ENCODE measurements at regions of chr12 and their contacts with region 1.

Region 1: DNA sequence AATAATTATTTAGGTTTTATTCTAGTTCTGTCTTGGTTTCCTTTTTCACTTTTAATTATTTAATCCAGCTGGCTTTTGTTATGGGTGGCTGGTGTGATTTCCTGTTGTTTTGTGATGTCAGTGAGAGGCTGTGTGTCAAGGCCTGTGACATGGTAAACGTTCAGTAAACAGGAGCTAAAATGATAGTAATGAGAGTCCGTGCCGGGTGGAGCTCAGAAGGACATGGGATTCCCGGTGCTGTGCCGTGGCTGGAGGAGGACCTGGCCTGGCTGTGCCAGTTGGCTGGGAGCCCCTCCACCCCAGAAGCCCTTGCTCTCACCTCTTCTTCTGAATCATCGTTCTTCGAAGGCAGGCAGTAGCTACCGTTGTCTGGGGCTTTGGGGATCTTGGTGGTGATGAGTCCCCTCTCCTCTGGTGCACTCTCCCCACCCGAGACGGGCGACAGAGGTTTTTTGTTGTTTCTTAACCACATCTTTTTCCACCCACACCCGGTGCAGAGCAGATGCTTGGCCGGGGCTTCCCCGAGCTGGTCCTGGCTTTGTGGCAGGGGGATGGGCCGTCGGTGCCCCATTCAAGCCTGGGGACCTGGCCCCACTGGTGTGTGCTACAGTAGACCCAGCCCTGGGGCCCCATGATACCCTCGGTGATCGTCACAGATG is 29.1 kb downstream of the SH2B3 start:
- DNase-seq: peak; percentile 96
- H3K4me3 Mint-ChIP-seq: peak overlapping the region; percentile 78
- H3K27ac Mint-ChIP-seq: peak overlapping the region; percentile 97
- H3K4me1 Mint-ChIP-seq: peaks cover 83% of the 10 kb centered on the region
- H3K27me3 Mint-ChIP-seq: no peaks in the 10 kb centered on the region

Region 2: DNA sequence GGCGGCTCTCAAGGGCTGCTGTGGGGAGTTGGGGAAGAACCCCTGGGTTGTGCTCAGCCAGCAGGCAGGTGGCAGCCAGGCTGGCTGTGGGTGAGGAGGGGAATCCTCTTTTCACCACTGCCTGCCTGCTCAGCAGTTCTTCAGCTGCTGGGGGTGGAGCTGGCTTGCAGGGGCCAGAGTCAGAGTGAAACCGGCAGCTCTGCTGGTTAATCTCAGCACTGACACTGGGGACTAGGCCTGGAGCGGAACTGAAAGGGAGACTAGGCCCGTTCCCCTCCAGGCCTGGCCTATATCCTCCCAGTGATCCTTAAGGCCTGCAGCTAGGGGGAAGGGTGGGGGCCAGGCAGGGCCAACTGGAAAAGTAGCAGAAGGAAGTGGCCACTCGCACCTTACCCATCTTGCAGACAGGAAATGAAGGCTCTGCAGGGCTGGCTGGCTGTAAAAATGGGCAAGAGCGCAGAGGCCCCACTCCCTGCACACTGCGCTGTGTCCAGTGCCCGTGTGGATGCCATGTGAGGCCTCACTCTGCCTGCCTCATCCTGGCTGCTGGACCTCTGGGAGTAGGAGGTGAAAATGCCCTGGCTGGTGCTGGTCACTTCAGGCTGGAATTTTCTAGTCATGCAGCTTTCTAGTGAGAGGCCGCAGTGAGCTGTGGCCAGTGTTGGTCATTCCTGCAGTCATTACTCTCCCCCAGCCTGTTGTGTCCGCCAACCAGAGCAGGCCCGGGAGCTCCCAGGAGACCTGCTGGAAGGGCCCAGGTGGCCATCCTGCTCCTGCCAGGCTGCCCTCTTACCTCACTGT is 10.3 kb after region 1 on chr12:
- intact Hi-C with region 1: loop called (anchors 1 kb)
- DNase-seq: peak; percentile 96
- H3K4me3 Mint-ChIP-seq: peak overlapping the region; percentile 71
- H3K27ac Mint-ChIP-seq: peak overlapping the region; percentile 88
- H3K4me1 Mint-ChIP-seq: peaks cover 82% of the 10 kb centered on the region
- H3K27me3 Mint-ChIP-seq: no peaks in the 10 kb centered on the region